Activated CD4-positive, alpha-beta T cell treated with anti-CD3 and anti-CD28 coated beads, Interleukin-2, amount 10 ng/mL, durations not matched to agents 7 days and 5 days (primary cell): ENCODE measurements at regions of chr5 and their contacts with region 1.

Region 1: GRCh38 chr5:41856644-41857491 is 13.4 kb downstream of the OXCT1 start:
- DNase-seq: peak; percentile 76
- H3K4me3 Mint-ChIP-seq: no peak overlapping the region
- H3K27ac Mint-ChIP-seq: no peak overlapping the region
- H3K4me1 Mint-ChIP-seq: peaks cover 14% of the 10 kb centered on the region
- H3K27me3 Mint-ChIP-seq: no peaks in the 10 kb centered on the region

Region 2: GRCh38 chr5:42057254-42057690 is 200.4 kb after region 1 on chr5:
- CTCF ChIA-PET with region 1: interaction called, 24 read pairs
- POLR2A ChIA-PET with region 1: no interaction called
- DNase-seq: peak; percentile 59
- H3K4me3 Mint-ChIP-seq: no peak overlapping the region
- H3K27ac Mint-ChIP-seq: no peak overlapping the region
- H3K4me1 Mint-ChIP-seq: no peaks in the 10 kb centered on the region
- H3K27me3 Mint-ChIP-seq: peaks cover 8% of the 10 kb centered on the region